GM23248 (cell line): ENCODE measurements at regions of chr1 and their contacts with region 1.

Region 1: GRCh38 chr1:62746085-62746808 is 37.7 kb upstream of the ATG4C start:
- DNase-seq: peak; percentile 81
- H3K4me3 ChIP-seq: peak overlapping the region; percentile 74
- H3K27ac ChIP-seq: peak overlapping the region; percentile 24; the same call in 1 of the 2 replicates
- H3K4me1 ChIP-seq: peaks cover 19% of the 10 kb centered on the region
- H3K27me3 ChIP-seq: no peaks in the 10 kb centered on the region

Region 2: DNA sequence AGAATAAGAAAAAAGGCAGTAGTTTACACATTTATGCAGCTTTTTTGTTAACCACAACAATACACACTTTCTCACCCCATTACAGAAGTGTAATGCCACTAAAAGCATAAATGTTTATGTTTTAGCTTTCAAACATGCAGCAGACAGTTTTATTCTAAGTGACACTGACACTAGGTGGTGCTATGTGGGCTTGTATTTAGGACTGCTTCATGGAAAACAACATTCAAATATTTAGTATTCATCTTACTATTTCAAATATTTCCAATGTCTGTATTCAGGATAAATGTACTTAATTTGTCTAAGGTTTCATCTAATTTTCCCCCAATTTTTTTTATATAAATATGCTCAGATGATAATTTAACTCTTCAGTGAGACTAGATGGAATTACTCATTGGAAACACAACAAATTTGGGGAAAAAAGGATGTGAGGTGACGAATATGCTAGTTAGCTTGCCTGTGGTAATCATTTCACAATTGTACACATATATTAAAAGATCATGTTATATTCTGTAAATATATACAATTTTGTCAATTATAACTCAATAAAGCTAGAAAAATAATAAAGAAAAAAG is 238.0 kb before region 1 on chr1:
- in situ Hi-C with region 1: loop called (anchors 10 kb)
- DNase-seq: peak; percentile 70
- H3K4me3 ChIP-seq: no peak overlapping the region
- H3K27ac ChIP-seq: no peak overlapping the region
- H3K4me1 ChIP-seq: no peaks in the 10 kb centered on the region
- H3K27me3 ChIP-seq: no peaks in the 10 kb centered on the region